ENCODE measurements at regions of chr3 and their contacts with region 1.

Region 1: GRCh38 chr3:172595641-172596393 is 72.6 kb upstream of the TNFSF10 start:
- DNase-seq: peak; percentile 47 to 78 (median 71)
- H3K4me3 ChIP-seq: peak overlapping the region; percentile 6 to 64 (median 42)
- H3K4me3 Mint-ChIP-seq: peak overlapping the region; percentile 66 to 92
- H3K27ac ChIP-seq: peak overlapping the region in 1 of 2 donors; percentile 80
- H3K27ac Mint-ChIP-seq: peak overlapping the region; percentile 78 to 93 (median 90)
- H3K4me1 ChIP-seq: peaks cover 48 to 51% of the 10 kb centered on the region in 2 donors
- H3K4me1 Mint-ChIP-seq: peaks cover 56% of the 10 kb centered on the region
- H3K27me3 ChIP-seq: no peaks in the 10 kb centered on the region
- H3K27me3 Mint-ChIP-seq: peaks cover 0 to 4% (median 2%) of the 10 kb centered on the region in 3 donors
- CTCF ChIP-seq: peak; percentile 84

Region 2: DNA sequence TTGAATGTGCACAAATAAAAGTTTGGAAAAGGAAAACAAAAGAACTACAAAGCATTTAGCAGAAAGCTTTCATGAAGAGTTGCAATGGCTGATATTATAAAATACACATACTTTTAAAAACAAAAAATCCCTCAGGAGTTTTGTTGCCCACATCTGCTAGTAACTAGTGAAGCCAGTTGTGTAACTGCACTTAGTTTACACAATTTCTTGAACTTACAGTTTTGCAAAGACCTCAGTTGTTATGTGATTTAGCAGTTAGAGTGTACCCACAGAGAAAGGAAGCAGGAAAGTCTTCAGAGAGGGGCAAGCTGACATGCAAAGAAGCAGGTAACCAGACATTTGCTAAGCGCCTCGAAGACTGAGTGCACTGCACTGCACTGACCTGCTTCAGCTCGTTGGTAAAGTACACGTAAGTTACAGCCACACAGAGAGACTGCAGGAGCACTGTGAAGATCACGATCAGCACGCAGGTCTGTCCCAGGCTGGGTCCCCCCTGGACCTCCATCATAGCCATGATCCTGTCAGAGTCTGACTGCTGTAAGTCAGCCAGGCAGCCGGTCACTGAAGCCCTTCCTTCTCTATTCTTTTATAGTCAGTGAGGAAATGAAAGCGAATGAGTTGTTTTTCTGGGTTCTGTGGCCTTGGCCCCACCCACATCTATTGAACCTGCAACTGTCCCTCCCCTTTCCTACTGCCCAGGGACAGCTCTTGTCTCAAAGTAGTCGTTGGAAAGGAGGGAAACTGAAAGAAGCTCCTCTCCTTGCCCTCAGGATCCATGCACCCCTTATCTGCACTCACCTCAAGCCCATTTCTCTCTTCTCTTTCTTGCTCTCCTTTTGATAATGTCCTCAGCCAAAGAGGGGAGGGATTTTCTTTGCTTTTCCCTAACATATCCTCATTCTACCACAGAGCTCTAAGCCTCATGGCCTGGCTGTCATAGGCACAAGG is 72.7 kb before region 1 on chr3 and contains the start of gene TNFSF10:
- intact Hi-C with region 1: loop called in 1 of 2 experiments (anchors 5 kb)
- DNase-seq: peak; percentile 70 to 84 (median 76)
- H3K4me3 ChIP-seq: peak within 1 kb of the TSS; percentile 79 to 97 (median 95)
- H3K4me3 Mint-ChIP-seq: peak within 1 kb of the TSS; percentile 91 to 95
- H3K27ac ChIP-seq: peak within 1 kb of the TSS; percentile 46 to 88
- H3K27ac Mint-ChIP-seq: peak within 1 kb of the TSS; percentile 86 to 94 (median 90)
- H3K4me1 ChIP-seq: peaks cover 27 to 40% of the 10 kb centered on the region in 2 donors
- H3K4me1 Mint-ChIP-seq: peaks cover 45% of the 10 kb centered on the region
- H3K27me3 ChIP-seq: no peaks in the 10 kb centered on the region
- H3K27me3 Mint-ChIP-seq: no peaks in the 10 kb centered on the region
- CTCF ChIP-seq: no peak
- polyA plus RNA-seq, gene TNFSF10: 146 to 293 (median 264) TPM

Region 3: GRCh38 chr3:172546628-172547214 is 49.1 kb before region 1 on chr3:
- intact Hi-C with region 1: loop called in 1 of 2 experiments (anchors 10 kb)
- DNase-seq: peak in 2 of 3 donors; percentile 44 to 73
- H3K4me3 ChIP-seq: peak overlapping the region in 1 of 3 experiments; percentile 27
- H3K4me3 Mint-ChIP-seq: peak overlapping the region in 1 of 2 donors; percentile 70
- H3K27ac ChIP-seq: peak overlapping the region; percentile 73 to 79
- H3K27ac Mint-ChIP-seq: peak overlapping the region; percentile 80 to 94 (median 92)
- H3K4me1 ChIP-seq: peaks cover 31 to 47% of the 10 kb centered on the region in 2 donors
- H3K4me1 Mint-ChIP-seq: peaks cover 52% of the 10 kb centered on the region
- H3K27me3 ChIP-seq: no peaks in the 10 kb centered on the region
- H3K27me3 Mint-ChIP-seq: peaks cover 0 to 1% (median 0%) of the 10 kb centered on the region in 3 donors
- CTCF ChIP-seq: no peak